ENCODE measurements at regions of chr17 and their contacts with region 1.

Region 1: GRCh38 chr17:35747540-35748017 is 5.5 kb downstream of the GAS2L2 start:
- DNase-seq: peak; percentile 43 to 52 (median 50)
- H3K4me3 ChIP-seq: no peak overlapping the region
- H3K4me3 Mint-ChIP-seq: no peak overlapping the region
- H3K27ac ChIP-seq: no peak overlapping the region
- H3K27ac Mint-ChIP-seq: no peak overlapping the region
- H3K4me1 ChIP-seq: no peaks in the 10 kb centered on the region
- H3K4me1 Mint-ChIP-seq: peaks cover 6% of the 10 kb centered on the region
- H3K27me3 ChIP-seq: peaks cover 7 to 39% of the 10 kb centered on the region in 2 donors
- H3K27me3 Mint-ChIP-seq: peaks cover 34 to 52% (median 50%) of the 10 kb centered on the region in 3 donors
- CTCF ChIP-seq: peak; percentile 84

Region 2: GRCh38 chr17:35161281-35161761 is 586.3 kb before region 1 on chr17:
- intact Hi-C with region 1: loop called in 1 of 2 experiments (anchors 10 kb)
- DNase-seq: peak in 1 of 3 donors; percentile 3
- H3K4me3 ChIP-seq: no peak overlapping the region
- H3K4me3 Mint-ChIP-seq: no peak overlapping the region
- H3K27ac ChIP-seq: no peak overlapping the region
- H3K27ac Mint-ChIP-seq: no peak overlapping the region
- H3K4me1 ChIP-seq: peaks cover 4 to 8% of the 10 kb centered on the region in 2 donors
- H3K4me1 Mint-ChIP-seq: peaks cover 13% of the 10 kb centered on the region
- H3K27me3 ChIP-seq: no peaks in the 10 kb centered on the region
- H3K27me3 Mint-ChIP-seq: peaks cover 4 to 8% (median 7%) of the 10 kb centered on the region in 3 donors
- CTCF ChIP-seq: no peak

Region 3: GRCh38 chr17:35170968-35171771 is 576.4 kb before region 1 on chr17:
- intact Hi-C with region 1: loop called (anchors 5 to 10 kb)
- DNase-seq: no peak
- H3K4me3 ChIP-seq: no peak overlapping the region
- H3K4me3 Mint-ChIP-seq: no peak overlapping the region
- H3K27ac ChIP-seq: no peak overlapping the region
- H3K27ac Mint-ChIP-seq: peak overlapping the region in 1 of 7 donors; percentile 44
- H3K4me1 ChIP-seq: no peaks in the 10 kb centered on the region
- H3K4me1 Mint-ChIP-seq: peaks cover 3% of the 10 kb centered on the region
- H3K27me3 ChIP-seq: no peaks in the 10 kb centered on the region
- H3K27me3 Mint-ChIP-seq: peaks cover 1 to 4% (median 4%) of the 10 kb centered on the region in 3 donors
- CTCF ChIP-seq: peak; percentile 36

Region 4: DNA sequence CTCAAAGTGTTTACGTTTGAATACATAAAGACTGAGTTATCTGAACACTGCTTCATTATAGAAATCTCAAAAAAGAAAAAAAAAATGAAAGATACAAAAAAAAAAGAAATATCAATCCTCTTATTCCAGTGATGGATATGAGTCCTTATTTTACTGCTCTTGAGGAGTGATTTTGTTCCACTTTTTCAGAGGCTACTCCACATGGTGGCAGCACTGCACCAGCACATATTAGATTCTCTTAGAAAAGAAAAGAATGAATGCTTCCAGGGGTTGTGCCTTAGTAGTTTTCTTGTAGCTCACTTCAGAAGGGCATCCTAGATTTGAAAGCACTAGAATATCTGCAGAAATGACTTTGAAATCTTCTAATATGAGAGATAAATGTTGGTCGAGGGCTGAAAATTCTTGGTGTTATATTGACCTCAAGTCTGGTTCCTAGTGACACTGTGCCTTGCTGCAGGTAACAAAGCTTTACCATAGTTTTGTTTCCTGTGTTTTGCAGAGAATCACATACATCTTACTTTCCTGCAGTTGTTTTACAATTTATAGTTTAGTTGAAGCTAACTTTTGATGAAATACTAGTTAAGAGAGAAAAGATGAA is 134.6 kb before region 1 on chr17:
- intact Hi-C with region 1: loop called in 1 of 2 experiments (anchors 5 kb)
- DNase-seq: no peak
- H3K4me3 ChIP-seq: no peak overlapping the region
- H3K4me3 Mint-ChIP-seq: no peak overlapping the region
- H3K27ac ChIP-seq: no peak overlapping the region
- H3K27ac Mint-ChIP-seq: no peak overlapping the region
- H3K4me1 ChIP-seq: no peaks in the 10 kb centered on the region
- H3K4me1 Mint-ChIP-seq: no peaks in the 10 kb centered on the region
- H3K27me3 ChIP-seq: no peaks in the 10 kb centered on the region
- H3K27me3 Mint-ChIP-seq: no peaks in the 10 kb centered on the region
- CTCF ChIP-seq: peak; percentile 50

Region 5: DNA sequence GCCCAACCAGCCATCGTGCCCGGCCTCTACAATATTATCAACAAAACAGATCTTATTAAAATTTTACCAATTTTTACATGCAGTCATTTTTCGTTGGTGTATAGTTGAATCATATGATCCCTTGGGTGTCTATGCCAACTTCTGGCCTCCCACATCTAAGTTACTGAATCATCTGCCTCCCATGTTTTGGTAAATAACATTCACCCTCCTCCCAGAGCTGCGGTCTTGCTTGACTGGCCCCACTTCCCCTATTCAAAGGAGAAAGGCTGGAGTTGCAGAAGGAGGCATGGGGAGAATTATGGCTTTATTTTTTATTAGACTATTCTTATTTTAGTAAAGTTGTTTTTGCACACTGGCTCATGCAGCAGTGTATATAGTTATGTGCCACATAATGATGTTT is 288.7 kb after region 1 on chr17:
- intact Hi-C with region 1: no loop called
- DNase-seq: peak; percentile 55 to 78 (median 63)
- H3K4me3 ChIP-seq: no peak overlapping the region
- H3K4me3 Mint-ChIP-seq: no peak overlapping the region
- H3K27ac ChIP-seq: peak overlapping the region in 1 of 2 donors; percentile 45
- H3K27ac Mint-ChIP-seq: peak overlapping the region; percentile 70 to 92 (median 88)
- H3K4me1 ChIP-seq: peaks cover 36 to 51% of the 10 kb centered on the region in 2 donors
- H3K4me1 Mint-ChIP-seq: peaks cover 46% of the 10 kb centered on the region
- H3K27me3 ChIP-seq: no peaks in the 10 kb centered on the region
- H3K27me3 Mint-ChIP-seq: peaks cover 0 to 2% (median 2%) of the 10 kb centered on the region in 3 donors
- CTCF ChIP-seq: no peak

Measured in CD14-positive monocyte (primary cell).